ENCODE measurements at regions of chr10 and their contacts with region 1.

Region 1: DNA sequence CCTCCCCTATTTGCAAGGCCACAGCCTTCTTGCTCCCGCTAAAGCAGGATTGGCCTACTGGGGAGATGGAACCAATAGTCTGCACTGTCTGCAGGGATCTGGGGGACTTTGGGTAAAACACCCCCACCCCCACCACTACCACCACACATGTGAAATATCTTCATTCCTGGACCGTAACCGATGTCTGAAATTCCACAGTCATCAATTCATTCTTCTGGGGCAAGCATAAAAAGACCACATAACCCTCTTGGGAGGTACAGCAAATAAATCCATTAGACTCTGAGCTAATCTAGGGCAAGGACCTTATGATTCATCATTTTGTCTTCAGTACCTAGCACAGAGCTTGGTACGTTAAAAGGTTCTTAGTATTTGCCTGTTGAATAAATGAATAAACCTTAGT is 307.8 kb downstream of the GPAM start:
- DNase-seq: no peak
- H3K4me3 ChIP-seq: no peak overlapping the region
- H3K27ac ChIP-seq: no peak overlapping the region
- H3K27me3 ChIP-seq: peaks cover 0 to 7% (median 0%) of the 10 kb centered on the region in 45 donors
- CTCF ChIP-seq: no peak

Region 2: GRCh38 chr10:111281516-111281915 is 594.2 kb before region 1 on chr10:
- intact Hi-C with region 1: loop called in 1 of 2 experiments (anchors 5 kb)
- DNase-seq: peak in 1 of 10 donors; percentile 22
- H3K4me3 ChIP-seq: no peak overlapping the region
- H3K27ac ChIP-seq: no peak overlapping the region
- H3K27me3 ChIP-seq: no peaks in the 10 kb centered on the region
- CTCF ChIP-seq: peak in 51 of 56 donors; percentile 10 to 58 (median 37)

Region 3: GRCh38 chr10:111916011-111916410 is 40.3 kb after region 1 on chr10:
- intact Hi-C with region 1: no loop called
- DNase-seq: no peak
- H3K4me3 ChIP-seq: no peak overlapping the region
- H3K27ac ChIP-seq: no peak overlapping the region
- H3K27me3 ChIP-seq: peaks cover 0 to 23% (median 0%) of the 10 kb centered on the region in 45 donors
- CTCF ChIP-seq: no peak